CD8-positive, alpha-beta memory T cell (primary cell): ENCODE measurements at regions of chr2 and their contacts with region 1.

Region 1: GRCh38 chr2:174603280-174603679 is 5.7 kb upstream of the WIPF1 start:
- DNase-seq: peak; percentile 22 to 72 (median 58)
- H3K4me3 ChIP-seq: no peak overlapping the region
- H3K4me3 Mint-ChIP-seq: peak overlapping the region in 4 of 7 donors; percentile 25 to 29 (median 28)
- H3K27ac ChIP-seq: no peak overlapping the region
- H3K27ac Mint-ChIP-seq: peak overlapping the region; percentile 23 to 93 (median 82)
- H3K4me1 ChIP-seq: peaks cover 80% of the 10 kb centered on the region
- H3K4me1 Mint-ChIP-seq: peaks cover 82 to 94% (median 93%) of the 10 kb centered on the region in 3 donors
- H3K27me3 ChIP-seq: no peaks in the 10 kb centered on the region
- H3K27me3 Mint-ChIP-seq: no peaks in the 10 kb centered on the region

Region 2: DNA sequence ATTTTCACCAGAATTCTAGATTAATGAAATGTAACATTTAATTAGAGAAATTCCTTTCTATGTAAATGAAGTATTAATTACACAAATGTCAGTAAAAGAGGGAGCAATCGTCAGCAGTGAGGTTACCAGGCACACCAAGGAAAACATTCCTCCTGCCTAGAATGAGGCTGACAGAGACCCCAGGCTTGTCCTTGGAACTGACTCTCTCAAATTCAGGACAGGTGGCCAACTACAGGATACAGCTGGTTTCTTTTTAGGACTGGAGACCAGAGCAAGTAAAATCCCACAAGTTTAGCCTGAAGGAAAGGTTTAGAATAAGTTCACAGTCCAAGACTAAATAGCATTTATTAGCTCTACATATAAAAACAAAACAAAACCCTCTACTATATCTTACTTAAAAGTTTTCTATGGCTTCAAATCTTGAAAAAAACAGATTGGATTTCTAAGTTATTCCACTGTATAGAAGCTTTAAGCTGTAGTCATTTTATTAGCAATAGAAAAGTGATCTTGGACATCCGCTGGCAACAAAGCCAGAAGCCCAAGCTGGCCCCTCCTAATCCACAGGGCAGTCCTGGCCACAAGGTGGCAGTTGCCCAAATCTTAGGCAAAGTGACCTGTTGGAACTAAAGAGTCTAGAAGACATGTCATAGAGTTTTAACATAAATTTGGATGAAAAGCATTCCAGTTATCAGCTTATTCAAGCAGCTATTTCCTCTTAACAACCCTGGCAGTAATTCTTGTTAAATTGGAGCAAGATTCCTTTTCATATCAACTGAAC is 719.1 kb before region 1 on chr2:
- CTCF ChIA-PET with region 1: no interaction called
- POLR2A ChIA-PET with region 1: no interaction called
- DNase-seq: peak in 4 of 5 donors; percentile 14 to 58 (median 16)
- H3K4me3 ChIP-seq: no peak overlapping the region
- H3K4me3 Mint-ChIP-seq: no peak overlapping the region
- H3K27ac ChIP-seq: no peak overlapping the region
- H3K27ac Mint-ChIP-seq: no peak overlapping the region
- H3K4me1 ChIP-seq: no peaks in the 10 kb centered on the region
- H3K4me1 Mint-ChIP-seq: peaks cover 2 to 4% (median 3%) of the 10 kb centered on the region in 3 donors
- H3K27me3 ChIP-seq: no peaks in the 10 kb centered on the region
- H3K27me3 Mint-ChIP-seq: peaks cover 22 to 53% of the 10 kb centered on the region in 2 donors

Region 3: DNA sequence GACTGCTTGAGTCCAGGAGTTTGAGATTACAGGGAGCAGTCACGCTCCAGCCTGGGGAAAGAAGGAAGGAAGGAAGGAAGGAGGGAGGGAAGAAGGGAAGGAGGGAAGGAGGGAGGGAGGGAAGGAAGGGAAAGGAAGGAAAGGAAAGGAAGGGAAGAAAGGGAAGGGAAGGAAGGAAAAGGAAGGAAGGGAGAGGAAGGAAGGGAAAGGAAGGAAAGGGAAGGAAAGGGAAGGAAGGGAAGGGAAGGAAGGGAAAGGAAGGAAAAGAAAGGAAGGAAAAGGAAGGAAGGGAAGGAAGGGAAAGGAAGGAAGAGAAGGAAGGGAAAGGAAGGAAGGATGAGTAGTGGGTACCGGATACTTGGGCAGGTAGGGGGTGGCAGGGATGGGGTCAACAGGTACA is 148.7 kb before region 1 on chr2:
- CTCF ChIA-PET with region 1: no interaction called
- POLR2A ChIA-PET with region 1: interaction called, 14 read pairs
- DNase-seq: no peak
- H3K4me3 ChIP-seq: no peak overlapping the region
- H3K4me3 Mint-ChIP-seq: no peak overlapping the region
- H3K27ac ChIP-seq: no peak overlapping the region
- H3K27ac Mint-ChIP-seq: peak overlapping the region in 1 of 8 donors; percentile 82
- H3K4me1 ChIP-seq: peaks cover 3% of the 10 kb centered on the region
- H3K4me1 Mint-ChIP-seq: peaks cover 4 to 9% (median 9%) of the 10 kb centered on the region in 3 donors
- H3K27me3 ChIP-seq: no peaks in the 10 kb centered on the region
- H3K27me3 Mint-ChIP-seq: no peaks in the 10 kb centered on the region

Region 4: GRCh38 chr2:174615871-174616436 is 12.7 kb after region 1 on chr2:
- CTCF ChIA-PET with region 1: interaction called, 11 read pairs
- POLR2A ChIA-PET with region 1: interaction called, 8 read pairs
- DNase-seq: no peak
- H3K4me3 ChIP-seq: no peak overlapping the region
- H3K4me3 Mint-ChIP-seq: peak overlapping the region in 6 of 7 donors; percentile 20 to 67 (median 38)
- H3K27ac ChIP-seq: no peak overlapping the region
- H3K27ac Mint-ChIP-seq: peak overlapping the region; percentile 43 to 91 (median 72)
- H3K4me1 ChIP-seq: peaks cover 76% of the 10 kb centered on the region
- H3K4me1 Mint-ChIP-seq: peaks cover 77 to 97% (median 95%) of the 10 kb centered on the region in 3 donors
- H3K27me3 ChIP-seq: no peaks in the 10 kb centered on the region
- H3K27me3 Mint-ChIP-seq: peaks cover 0 to 1% of the 10 kb centered on the region in 2 donors

Region 5: GRCh38 chr2:174688079-174688478 is 84.8 kb after region 1 on chr2:
- CTCF ChIA-PET with region 1: interaction called, 26 read pairs
- POLR2A ChIA-PET with region 1: interaction called, 4 read pairs
- DNase-seq: peak in 2 of 5 donors; percentile 36 to 47
- H3K4me3 ChIP-seq: no peak overlapping the region
- H3K4me3 Mint-ChIP-seq: peak overlapping the region in 1 of 7 donors; percentile 57
- H3K27ac ChIP-seq: no peak overlapping the region
- H3K27ac Mint-ChIP-seq: peak overlapping the region; percentile 19 to 67 (median 39)
- H3K4me1 ChIP-seq: no peaks in the 10 kb centered on the region
- H3K4me1 Mint-ChIP-seq: peaks cover 18 to 37% (median 24%) of the 10 kb centered on the region in 3 donors
- H3K27me3 ChIP-seq: no peaks in the 10 kb centered on the region
- H3K27me3 Mint-ChIP-seq: peaks cover 2 to 8% of the 10 kb centered on the region in 2 donors